Body of pancreas (tissue), 4 donors: ENCODE measurements at regions of chr12 and their contacts with region 1.

Region 1: GRCh38 chr12:4276524-4277204 is 3.1 kb downstream of the CCND2 start:
- DNase-seq: peak; percentile 90 to 92 (median 91)
- ATAC-seq: peak; percentile 70
- H3K4me3 ChIP-seq: no peak overlapping the region
- H3K27ac ChIP-seq: peak overlapping the region in 3 of 4 donors; percentile 26 to 80 (median 62)
- H3K4me1 ChIP-seq: peaks cover 77% of the 10 kb centered on the region
- H3K27me3 ChIP-seq: peaks cover 0 to 4% of the 10 kb centered on the region in 2 donors
- CTCF ChIP-seq: peak; percentile 82 to 96 (median 95)
- POLR2A ChIP-seq: peak in 1 of 3 donors; percentile 23

Region 2: GRCh38 chr12:3892631-3893030 is 384.0 kb before region 1 on chr12:
- intact Hi-C with region 1: loop called (anchors 5 kb)
- DNase-seq: no peak
- ATAC-seq: no peak
- H3K4me3 ChIP-seq: no peak overlapping the region
- H3K27ac ChIP-seq: no peak overlapping the region
- H3K4me1 ChIP-seq: no peaks in the 10 kb centered on the region
- H3K27me3 ChIP-seq: no peaks in the 10 kb centered on the region
- CTCF ChIP-seq: no peak
- POLR2A ChIP-seq: no peak

Region 3: GRCh38 chr12:4044736-4045730 is 231.6 kb before region 1 on chr12:
- intact Hi-C with region 1: loop called (anchors 10 kb)
- DNase-seq: no peak
- ATAC-seq: no peak
- H3K4me3 ChIP-seq: no peak overlapping the region
- H3K27ac ChIP-seq: no peak overlapping the region
- H3K4me1 ChIP-seq: no peaks in the 10 kb centered on the region
- H3K27me3 ChIP-seq: no peaks in the 10 kb centered on the region
- CTCF ChIP-seq: no peak
- POLR2A ChIP-seq: no peak